ENCODE measurements at regions of chr14 and their contacts with region 1.

Region 1: DNA sequence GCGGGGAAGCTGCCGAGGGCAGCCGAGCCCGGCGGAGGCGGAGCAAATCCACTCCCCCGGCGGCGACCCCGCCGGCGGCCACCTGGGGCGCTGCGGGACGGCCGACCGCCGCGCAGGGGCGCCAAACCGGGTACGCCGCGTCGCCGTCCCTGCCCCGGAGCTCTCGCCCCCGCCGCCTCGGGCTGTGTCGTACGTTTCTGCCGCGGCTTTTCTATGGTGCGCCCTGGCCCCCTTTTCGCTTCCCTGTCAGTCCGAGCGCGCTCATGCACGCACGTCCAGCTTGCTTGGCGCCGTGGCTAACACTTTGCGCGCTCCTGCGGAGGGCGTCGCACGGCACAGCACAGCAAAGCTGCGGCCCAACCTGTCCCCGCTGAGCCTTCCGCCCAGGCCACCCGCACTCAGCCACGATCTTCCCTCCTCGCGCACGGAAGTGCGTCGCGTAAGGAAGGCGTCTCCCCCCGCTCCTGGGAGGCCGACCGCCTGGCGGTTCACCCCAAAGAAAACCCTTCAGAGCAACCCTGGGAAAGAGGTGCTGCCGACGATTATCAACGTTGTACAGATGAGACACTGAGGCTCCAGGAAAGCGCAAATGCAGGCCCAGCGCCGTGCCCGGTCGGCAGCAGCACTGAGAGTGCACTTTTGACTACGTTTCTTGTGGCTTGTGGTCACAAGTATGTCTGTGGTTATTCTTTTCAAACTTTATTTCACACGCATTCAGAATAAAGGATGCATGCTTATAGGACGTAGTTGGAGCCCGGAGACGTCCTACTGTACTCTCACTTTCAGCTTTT is at the start of gene HECTD1:
- DNase-seq: peak in 1 of 2 donors; percentile 90
- H3K4me3 ChIP-seq: peak within 1 kb of the TSS; percentile 65 to 71
- H3K27ac ChIP-seq: peak within 1 kb of the TSS; percentile 97
- H3K4me1 ChIP-seq: peaks cover 32% of the 10 kb centered on the region
- H3K27me3 ChIP-seq: no peaks in the 10 kb centered on the region
- CTCF ChIP-seq: peak in 2 of 3 experiments; percentile 49 to 86
- POLR2A ChIP-seq: peak in 1 of 2 donors; percentile 12
- total RNA-seq, gene HECTD1: 325 TPM

Region 2: DNA sequence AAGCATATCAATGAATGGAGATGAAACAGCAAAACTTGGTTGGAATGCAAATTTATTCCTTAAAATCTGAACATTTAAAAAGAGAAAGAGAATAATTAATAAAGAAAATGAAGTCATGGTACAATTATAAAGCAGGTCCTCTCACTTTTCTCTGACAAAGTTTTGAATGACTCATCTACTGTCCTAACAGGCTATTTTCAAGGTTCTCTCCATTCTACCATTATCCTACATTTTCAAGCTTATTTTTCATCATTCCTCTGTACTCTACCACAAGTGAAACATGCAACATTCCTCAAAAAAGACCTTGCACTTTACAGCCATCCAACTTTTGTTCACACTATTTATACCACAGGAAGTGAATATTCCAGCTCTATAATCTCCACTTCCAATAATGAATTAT is 219.4 kb before region 1 on chr14:
- intact Hi-C with region 1: no loop called
- DNase-seq: no peak
- H3K4me3 ChIP-seq: no peak overlapping the region
- H3K27ac ChIP-seq: no peak overlapping the region
- H3K4me1 ChIP-seq: peaks cover 22% of the 10 kb centered on the region
- H3K27me3 ChIP-seq: no peaks in the 10 kb centered on the region
- CTCF ChIP-seq: no peak
- POLR2A ChIP-seq: no peak

Region 3: GRCh38 chr14:31166271-31166710 is 41.7 kb before region 1 on chr14:
- intact Hi-C with region 1: loop called (anchors 5 kb)
- DNase-seq: no peak
- H3K4me3 ChIP-seq: no peak overlapping the region
- H3K27ac ChIP-seq: peak overlapping the region; percentile 80
- H3K4me1 ChIP-seq: peaks cover 7% of the 10 kb centered on the region
- H3K27me3 ChIP-seq: no peaks in the 10 kb centered on the region
- CTCF ChIP-seq: no peak
- POLR2A ChIP-seq: no peak

Region 4: DNA sequence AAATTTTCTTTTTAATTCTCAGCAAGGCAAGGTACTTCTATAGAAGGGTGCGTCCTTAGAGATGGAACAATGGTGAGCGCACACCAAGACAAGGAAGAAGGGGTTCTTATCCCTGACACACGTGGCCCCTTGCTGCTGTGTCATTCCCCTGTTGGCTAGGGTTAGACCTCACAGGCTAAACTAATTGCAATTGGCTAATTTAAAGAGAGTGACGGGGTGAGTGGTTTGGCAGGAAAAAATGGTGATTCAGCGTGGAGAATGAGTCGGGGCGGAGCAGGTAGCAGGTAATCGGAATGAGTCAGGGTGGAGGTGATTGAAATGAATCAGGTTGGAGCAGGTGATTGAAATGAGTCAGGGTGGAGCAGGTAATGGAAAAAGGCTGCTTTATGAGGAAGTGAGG is 35.9 kb after region 1 on chr14:
- intact Hi-C with region 1: no loop called
- DNase-seq: no peak
- H3K4me3 ChIP-seq: no peak overlapping the region
- H3K27ac ChIP-seq: peak overlapping the region; percentile 59
- H3K4me1 ChIP-seq: peaks cover 7% of the 10 kb centered on the region
- H3K27me3 ChIP-seq: no peaks in the 10 kb centered on the region
- CTCF ChIP-seq: no peak
- POLR2A ChIP-seq: no peak